Activated CD8-positive, alpha-beta T cell treated with anti-CD3 and anti-CD28 coated beads, Interleukin-2, amount 10 ng/mL, durations not matched to agents 7 days and 5 days (primary cell): ENCODE measurements at regions of chr14 and their contacts with region 1.

Region 1: DNA sequence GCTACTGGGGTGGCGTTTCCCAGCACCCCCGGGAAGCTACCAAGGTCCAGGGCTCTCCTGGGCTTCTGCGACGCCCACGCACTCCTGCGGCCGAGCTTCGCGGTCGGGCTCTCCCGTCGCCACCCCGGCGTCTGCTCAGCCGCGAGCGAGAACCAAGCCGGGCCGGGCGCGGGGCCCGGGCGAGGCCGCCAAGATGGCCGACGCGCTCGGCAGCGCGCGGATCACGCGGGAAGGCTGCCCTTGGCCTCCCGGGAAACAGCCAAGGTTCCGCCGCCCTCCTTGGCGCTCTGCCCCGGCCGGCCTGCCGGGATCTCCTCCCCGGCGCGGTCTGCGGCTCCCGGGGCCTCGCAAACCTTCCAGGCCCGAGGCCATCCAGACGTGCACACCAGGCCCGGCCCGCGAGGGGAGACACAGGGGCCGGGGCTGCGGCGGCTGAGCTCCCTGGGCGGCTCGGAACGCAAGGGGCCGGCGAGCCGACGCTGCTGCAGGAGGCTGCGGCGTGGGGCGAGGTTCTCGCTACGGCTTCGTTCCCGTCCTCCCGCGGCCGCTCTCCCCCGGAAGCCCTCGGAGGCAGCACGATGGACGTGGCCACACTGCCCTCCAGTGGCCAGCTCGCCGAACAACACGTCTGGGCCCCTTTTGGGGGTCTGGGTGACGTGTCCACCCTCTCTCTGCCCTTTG is 23.5 kb upstream of the ZFP36L1 start:
- DNase-seq: peak; percentile 93
- ATAC-seq: peak; percentile 86
- H3K4me3 Mint-ChIP-seq: peak overlapping the region; percentile 66
- H3K27ac Mint-ChIP-seq: peak overlapping the region; percentile 90
- H3K4me1 Mint-ChIP-seq: peaks cover 69% of the 10 kb centered on the region
- H3K27me3 Mint-ChIP-seq: no peaks in the 10 kb centered on the region

Region 2: GRCh38 chr14:67943947-67944346 is 872.5 kb before region 1 on chr14:
- CTCF ChIA-PET with region 1: interaction called, 37 read pairs
- POLR2A ChIA-PET with region 1: interaction called, 3 read pairs
- DNase-seq: peak; percentile 68
- ATAC-seq: peak; percentile 42
- H3K4me3 Mint-ChIP-seq: no peak overlapping the region
- H3K27ac Mint-ChIP-seq: no peak overlapping the region
- H3K4me1 Mint-ChIP-seq: no peaks in the 10 kb centered on the region
- H3K27me3 Mint-ChIP-seq: peaks cover 7% of the 10 kb centered on the region

Region 3: DNA sequence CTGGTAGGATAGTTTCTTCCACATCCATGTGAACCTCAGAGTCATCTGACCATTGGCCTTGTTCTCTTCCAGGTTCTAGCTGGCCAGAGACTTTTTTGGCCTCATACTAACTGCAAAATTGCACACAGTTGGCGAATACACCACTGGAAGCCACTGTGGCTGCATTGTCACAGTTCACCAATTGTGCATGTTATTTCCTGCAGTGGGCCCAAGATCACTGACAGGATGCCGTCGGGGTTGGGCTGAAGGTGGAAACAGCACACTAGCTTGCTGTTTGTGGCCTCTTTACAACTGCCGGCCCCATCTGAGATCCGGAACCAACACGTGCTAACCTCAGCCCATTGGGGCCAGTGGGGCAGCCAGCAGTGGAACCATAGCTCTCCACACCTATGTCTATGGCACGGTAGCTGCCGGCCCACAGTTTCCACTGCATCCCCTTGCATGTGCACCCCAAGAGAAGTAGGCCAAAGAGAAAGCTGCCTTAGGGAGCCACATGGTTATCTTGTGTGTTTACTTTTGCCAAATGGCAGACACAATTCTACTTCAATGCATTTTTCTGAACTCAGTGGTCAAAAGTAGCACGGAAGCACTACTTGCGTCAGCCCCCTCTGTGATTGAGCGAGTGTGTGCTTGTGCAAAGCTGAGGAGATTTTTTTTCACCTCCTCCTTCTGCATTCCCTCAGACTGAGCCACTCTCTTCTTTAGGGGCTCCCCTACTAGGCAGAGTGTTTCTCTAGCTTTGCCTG is 532.9 kb before region 1 on chr14:
- CTCF ChIA-PET with region 1: interaction called, 13 read pairs
- POLR2A ChIA-PET with region 1: interaction called, 11 read pairs
- DNase-seq: peak; percentile 84
- ATAC-seq: peak; percentile 78
- H3K4me3 Mint-ChIP-seq: peak overlapping the region; percentile 57
- H3K27ac Mint-ChIP-seq: peak overlapping the region; percentile 98
- H3K4me1 Mint-ChIP-seq: peaks cover 50% of the 10 kb centered on the region
- H3K27me3 Mint-ChIP-seq: no peaks in the 10 kb centered on the region

Region 4: GRCh38 chr14:68734231-68734775 is 82.1 kb before region 1 on chr14:
- CTCF ChIA-PET with region 1: interaction called, 10 read pairs
- POLR2A ChIA-PET with region 1: interaction called, 3 read pairs
- DNase-seq: peak; percentile 57
- ATAC-seq: peak; percentile 82
- H3K4me3 Mint-ChIP-seq: peak overlapping the region; percentile 16
- H3K27ac Mint-ChIP-seq: peak overlapping the region; percentile 70
- H3K4me1 Mint-ChIP-seq: peaks cover 38% of the 10 kb centered on the region
- H3K27me3 Mint-ChIP-seq: no peaks in the 10 kb centered on the region

Region 5: DNA sequence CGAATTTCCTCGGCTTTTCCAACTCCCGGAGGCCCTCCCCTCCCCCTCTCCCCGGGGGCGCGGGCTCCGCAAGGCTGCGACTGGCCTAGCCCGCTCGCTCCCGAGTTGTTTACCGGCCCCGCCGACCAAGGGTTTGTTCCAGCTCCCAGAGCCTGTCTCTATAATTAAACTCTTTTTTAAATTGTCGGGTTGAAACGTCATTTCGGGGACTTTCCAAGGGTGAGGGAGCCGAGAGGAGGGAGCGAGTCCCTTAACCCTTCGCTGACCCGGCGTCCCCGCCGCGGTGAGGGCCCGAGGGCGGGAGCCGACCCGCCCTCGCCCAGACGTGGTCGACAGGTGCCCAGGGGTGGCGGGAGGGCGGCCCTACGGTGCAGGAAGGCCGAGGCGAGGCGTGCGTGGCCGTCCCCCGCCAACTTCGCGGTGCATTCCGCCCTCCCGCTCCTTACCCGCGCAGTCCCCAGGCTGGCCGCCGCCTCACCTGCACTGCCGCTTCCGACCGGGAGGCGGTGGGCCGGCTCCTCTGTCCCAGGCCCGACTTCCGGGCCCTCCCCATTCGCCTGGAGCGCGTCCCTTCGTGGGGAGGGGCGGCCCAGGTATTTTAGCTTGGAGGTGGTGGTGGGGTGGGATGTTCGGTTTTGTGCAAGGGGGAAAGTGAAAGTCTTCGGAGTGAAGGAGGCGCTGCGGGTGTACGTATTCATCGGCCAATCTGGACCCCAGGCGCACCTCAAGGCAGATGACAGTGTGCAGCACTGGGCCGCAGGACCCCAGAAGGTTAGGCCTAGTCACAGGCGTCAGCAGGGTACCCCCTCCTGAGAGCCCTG is 20.6 kb before region 1 on chr14:
- CTCF ChIA-PET with region 1: interaction called, 246 read pairs
- POLR2A ChIA-PET with region 1: interaction called, 314 read pairs
- DNase-seq: peak; percentile 86
- ATAC-seq: peak; percentile 50
- H3K4me3 Mint-ChIP-seq: peak overlapping the region; percentile 87
- H3K27ac Mint-ChIP-seq: peak overlapping the region; percentile 100
- H3K4me1 Mint-ChIP-seq: peaks cover 41% of the 10 kb centered on the region
- H3K27me3 Mint-ChIP-seq: no peaks in the 10 kb centered on the region